PC-9 (cell line): ENCODE measurements at regions of chr3 and their contacts with region 1.

Region 1: GRCh38 chr3:138673641-138674530 is 65.3 kb downstream of the FAIM start:
- DNase-seq: no peak
- H3K4me3 ChIP-seq: no peak overlapping the region
- H3K27ac ChIP-seq: no peak overlapping the region
- H3K4me1 ChIP-seq: no peaks in the 10 kb centered on the region; the same call in 1 of the 2 replicates
- H3K27me3 ChIP-seq: no peaks in the 10 kb centered on the region
- CTCF ChIP-seq: no peak

Region 2: GRCh38 chr3:138646513-138646912 is 27.4 kb before region 1 on chr3:
- CTCF ChIA-PET with region 1: interaction called, 18 read pairs
- POLR2A ChIA-PET with region 1: no interaction called
- intact Hi-C with region 1: no loop called
- DNase-seq: no peak
- H3K4me3 ChIP-seq: no peak overlapping the region
- H3K27ac ChIP-seq: no peak overlapping the region
- H3K4me1 ChIP-seq: no peaks in the 10 kb centered on the region
- H3K27me3 ChIP-seq: no peaks in the 10 kb centered on the region
- CTCF ChIP-seq: no peak

Region 3: GRCh38 chr3:138686771-138687221 is 12.9 kb after region 1 on chr3:
- CTCF ChIA-PET with region 1: no interaction called
- POLR2A ChIA-PET with region 1: interaction called, 11 read pairs
- intact Hi-C with region 1: no loop called
- DNase-seq: peak; percentile 37 to 92
- H3K4me3 ChIP-seq: no peak overlapping the region
- H3K27ac ChIP-seq: peak overlapping the region; percentile 65
- H3K4me1 ChIP-seq: peaks cover 27% of the 10 kb centered on the region
- H3K27me3 ChIP-seq: no peaks in the 10 kb centered on the region
- CTCF ChIP-seq: no peak